Mammary epithelial cell (primary cell): ENCODE measurements at regions of chr5 and their contacts with region 1.

Region 1: DNA sequence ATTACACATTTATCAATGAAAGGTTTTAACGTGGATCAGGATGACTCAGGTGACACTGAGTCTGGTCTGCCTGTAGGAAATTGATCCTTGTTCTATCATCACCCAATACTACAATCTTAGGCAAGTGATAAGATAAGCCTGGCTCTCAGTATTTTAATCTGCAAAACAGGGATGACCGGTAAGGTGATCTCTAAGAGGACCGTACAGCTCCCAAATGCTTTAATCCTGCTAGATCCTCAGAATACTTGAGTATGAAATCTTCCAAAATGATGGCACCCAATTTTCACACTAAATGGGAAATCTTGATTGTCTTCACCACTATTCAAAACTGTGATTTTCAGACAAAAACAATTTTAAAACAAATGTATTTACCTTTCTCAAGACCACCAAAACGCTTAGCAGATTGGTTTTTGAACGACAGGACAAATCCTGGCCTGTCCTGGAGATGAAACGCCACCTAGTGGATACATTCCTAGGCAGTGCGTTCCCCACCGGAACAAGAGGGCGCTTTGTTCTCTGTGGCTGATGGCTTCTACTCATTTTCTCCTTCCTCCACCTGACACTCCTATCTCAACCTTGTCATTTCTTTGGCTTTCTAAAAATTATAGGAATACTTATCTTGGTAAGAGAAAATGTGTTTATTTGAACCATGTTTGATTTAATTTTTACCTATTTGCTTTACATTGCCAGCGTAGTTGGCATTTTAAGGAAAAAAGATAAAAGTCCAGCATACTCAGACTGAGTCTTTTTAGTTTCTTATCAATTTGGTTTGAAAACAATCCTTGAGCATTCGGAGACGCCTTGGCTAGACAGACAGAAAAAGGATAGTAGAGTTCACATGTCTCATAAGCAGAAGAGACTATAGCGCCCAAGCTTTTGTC is 41.2 kb upstream of the VCAN start:
- DNase-seq: peak; percentile 46
- H3K4me3 ChIP-seq: no peak overlapping the region
- H3K27ac ChIP-seq: no peak overlapping the region
- H3K4me1 ChIP-seq: no peaks in the 10 kb centered on the region
- H3K27me3 ChIP-seq: no peaks in the 10 kb centered on the region
- CTCF ChIP-seq: peak; percentile 95

Region 2: GRCh38 chr5:82885627-82886389 is 544.6 kb before region 1 on chr5:
- CTCF ChIA-PET with region 1: no interaction called
- dilution Hi-C with region 1: no loop called
- in situ Hi-C with region 1: no loop called
- intact Hi-C with region 1: loop called (anchors 1 kb)
- DNase-seq: peak; percentile 21
- H3K4me3 ChIP-seq: no peak overlapping the region
- H3K27ac ChIP-seq: no peak overlapping the region
- H3K4me1 ChIP-seq: no peaks in the 10 kb centered on the region
- H3K27me3 ChIP-seq: no peaks in the 10 kb centered on the region
- CTCF ChIP-seq: peak in 1 of 2 donors; percentile 15

Region 3: DNA sequence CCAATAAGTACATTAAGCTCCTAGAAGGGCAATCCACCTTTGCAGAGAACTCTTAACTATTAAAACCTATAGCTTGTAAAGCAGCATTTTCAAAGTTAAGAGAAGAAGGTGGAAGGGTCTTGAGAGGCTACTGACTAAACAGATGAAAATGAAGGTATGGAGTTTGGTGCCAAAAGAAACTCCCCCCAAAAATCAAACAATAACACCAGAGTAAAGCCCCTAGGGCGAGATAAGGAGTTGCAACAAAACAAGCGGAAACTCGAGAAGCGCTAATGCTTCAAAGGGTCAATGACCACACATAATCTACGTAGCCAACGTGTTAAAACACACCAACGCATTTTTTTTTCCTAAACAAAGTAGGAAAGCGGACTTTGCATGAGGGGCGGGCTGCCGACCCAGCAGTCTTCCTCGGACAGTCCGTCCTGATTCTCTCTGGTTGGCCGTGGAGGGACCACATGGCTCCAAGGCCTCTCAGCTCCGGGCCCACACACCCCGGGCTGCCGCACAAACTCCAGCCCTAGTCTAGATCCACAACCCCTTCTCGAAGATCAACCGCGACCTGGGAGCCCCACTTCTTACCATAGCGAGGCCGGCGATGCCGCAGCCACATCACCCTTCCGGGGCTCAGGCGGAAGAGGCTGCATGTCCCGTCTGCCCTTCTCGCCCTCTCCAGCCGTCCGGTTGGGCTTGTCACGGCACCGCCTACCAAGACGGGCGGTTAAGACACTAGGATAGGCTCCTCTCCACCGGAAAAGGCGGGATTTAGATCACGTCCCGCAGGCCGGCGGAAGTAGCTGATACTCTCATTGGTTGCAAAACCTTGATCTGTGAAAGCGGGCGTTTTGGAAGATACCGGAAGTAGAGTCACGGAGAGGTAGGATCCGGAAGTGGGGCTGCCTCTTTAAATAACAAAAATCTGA is 353.4 kb before region 1 on chr5 and contains the starts of genes TMEM167A and XRCC4:
- CTCF ChIA-PET with region 1: no interaction called
- dilution Hi-C with region 1: no loop called
- in situ Hi-C with region 1: no loop called
- intact Hi-C with region 1: loop called (anchors 2 kb)
- DNase-seq: peak; percentile 98
- H3K4me3 ChIP-seq: peak within 1 kb of the TSS; percentile 75 to 91 (median 86)
- H3K27ac ChIP-seq: peak within 1 kb of the TSS; percentile 87
- H3K4me1 ChIP-seq: peaks cover 8% of the 10 kb centered on the region
- H3K27me3 ChIP-seq: no peaks in the 10 kb centered on the region
- CTCF ChIP-seq: no peak
- total RNA-seq, gene TMEM167A: 49.8 to 88.5 TPM
- total RNA-seq, gene XRCC4: 6.3 to 8.3 TPM

Region 4: DNA sequence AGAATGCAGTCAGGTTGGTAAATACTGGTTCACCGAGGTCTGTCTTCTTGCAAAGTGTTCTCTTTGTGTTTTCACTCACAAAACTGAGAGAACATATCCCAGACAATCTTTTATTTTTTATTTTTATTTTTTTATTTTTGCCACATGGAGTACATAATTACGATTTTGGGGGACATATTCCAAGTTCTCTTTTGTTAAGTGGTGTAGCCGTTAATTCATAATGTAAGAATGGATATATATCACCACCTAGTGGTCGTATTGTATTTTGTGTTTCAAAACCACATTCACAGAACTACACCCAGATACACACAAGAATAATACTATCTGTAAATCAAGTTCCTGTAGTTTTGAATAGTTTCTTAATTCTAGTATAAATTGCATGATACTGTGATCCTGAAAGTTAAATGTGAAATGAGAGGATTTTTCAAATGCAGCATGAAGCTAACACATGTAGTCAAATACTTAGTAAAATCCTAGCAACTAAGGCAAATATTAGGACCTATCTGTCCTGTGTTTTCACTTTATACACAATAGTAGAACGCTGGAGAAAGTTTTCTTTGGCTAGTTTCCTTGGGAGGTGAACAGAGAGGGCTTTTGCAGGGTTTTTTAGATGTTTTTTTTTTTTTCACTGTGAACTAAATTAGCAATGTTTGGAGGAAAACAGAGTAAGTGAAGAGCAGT is 133.8 kb after region 1 on chr5:
- CTCF ChIA-PET with region 1: no interaction called
- dilution Hi-C with region 1: no loop called
- in situ Hi-C with region 1: no loop called
- intact Hi-C with region 1: loop called (anchors 2 kb)
- DNase-seq: peak; percentile 21
- H3K4me3 ChIP-seq: no peak overlapping the region
- H3K27ac ChIP-seq: no peak overlapping the region
- H3K4me1 ChIP-seq: peaks cover 12% of the 10 kb centered on the region
- H3K27me3 ChIP-seq: no peaks in the 10 kb centered on the region
- CTCF ChIP-seq: peak; percentile 40 to 51